Vagina (tissue), 2 donors: ENCODE measurements at regions of chr13 and their contacts with region 1.

Region 1: DNA sequence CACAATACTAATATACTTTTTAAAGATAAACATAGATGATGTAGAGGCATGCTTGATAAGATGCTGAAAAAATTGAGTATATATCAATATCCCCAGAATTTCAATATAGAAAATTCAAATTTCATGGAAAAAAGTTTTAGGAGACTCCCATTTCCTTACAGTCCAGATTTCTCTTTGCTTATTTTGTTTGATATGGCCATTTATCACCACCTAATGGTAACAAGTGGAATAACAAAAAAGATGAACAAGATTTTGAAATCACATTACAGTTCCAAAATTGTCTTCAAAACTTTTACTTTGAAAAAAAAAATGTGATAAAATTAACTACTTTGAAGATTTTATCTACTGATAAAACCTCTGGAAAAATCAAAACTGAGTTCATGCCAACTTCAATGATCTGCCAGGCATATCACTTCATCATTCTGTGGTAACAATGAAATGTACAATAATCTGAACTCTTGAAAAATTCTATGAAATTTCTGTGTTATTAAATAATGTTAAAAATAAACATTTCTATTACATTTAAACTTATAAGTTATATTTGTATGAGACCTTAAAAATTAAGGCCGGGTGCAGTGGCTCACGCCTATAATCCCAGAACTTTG is 17.5 kb downstream of the MIPEP start:
- DNase-seq: no peak
- H3K4me3 ChIP-seq: no peak overlapping the region
- H3K27ac ChIP-seq: no peak overlapping the region
- H3K4me1 ChIP-seq: peaks cover 7% of the 10 kb centered on the region
- H3K27me3 ChIP-seq: no peaks in the 10 kb centered on the region
- CTCF ChIP-seq: peak; percentile 33 to 68 (median 53)
- POLR2A ChIP-seq: no peak

Region 2: GRCh38 chr13:23466144-23467002 is 405.3 kb before region 1 on chr13:
- intact Hi-C with region 1: loop called (anchors 2 kb)
- DNase-seq: no peak
- H3K4me3 ChIP-seq: peak overlapping the region; percentile 54 to 66
- H3K27ac ChIP-seq: peak overlapping the region; percentile 85
- H3K4me1 ChIP-seq: peaks cover 6% of the 10 kb centered on the region
- H3K27me3 ChIP-seq: no peaks in the 10 kb centered on the region
- CTCF ChIP-seq: peak in 2 of 3 experiments; percentile 17 to 61
- POLR2A ChIP-seq: no peak

Region 3: DNA sequence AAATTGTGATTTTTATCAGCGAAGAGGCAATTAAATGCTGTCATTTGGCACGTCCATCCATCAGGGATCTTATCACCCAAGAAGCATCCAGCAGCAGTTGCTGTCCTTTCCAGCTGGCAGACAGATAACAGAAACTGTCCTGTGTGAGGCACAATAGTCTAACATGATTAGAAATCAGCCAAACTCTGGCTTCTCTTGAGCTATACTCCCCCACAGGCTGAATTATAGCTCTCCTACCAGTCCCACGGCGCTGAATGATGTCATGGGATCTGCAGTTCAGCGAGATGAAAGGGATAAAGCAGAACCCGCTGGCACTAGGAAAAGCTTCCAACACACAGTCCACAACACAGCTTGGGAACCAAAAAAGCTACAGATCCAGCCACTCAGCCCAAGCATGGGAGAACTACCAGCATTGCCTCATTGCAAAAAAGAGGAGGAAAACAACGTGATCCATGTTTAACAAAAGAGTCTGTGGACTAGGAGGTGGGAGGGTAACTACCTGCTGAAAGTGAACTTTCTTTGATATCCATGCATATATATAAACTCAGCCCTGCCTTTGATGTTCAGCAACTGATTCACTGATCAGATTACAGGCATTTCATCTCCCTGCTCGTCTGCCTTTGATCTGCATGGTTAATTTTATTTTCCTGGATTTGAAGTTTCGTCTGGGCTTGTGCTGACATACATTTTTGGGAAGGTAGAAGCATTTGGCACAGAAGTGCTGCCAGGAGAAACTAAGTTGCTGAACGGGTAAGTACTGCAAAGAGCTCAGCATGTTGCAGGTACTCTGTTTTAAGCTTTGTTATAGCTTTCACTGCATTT is 301.4 kb before region 1 on chr13 and contains the start of gene TNFRSF19:
- intact Hi-C with region 1: loop called (anchors 5 kb)
- DNase-seq: no peak
- H3K4me3 ChIP-seq: peak within 1 kb of the TSS in 1 of 2 donors; percentile 15
- H3K27ac ChIP-seq: peak within 1 kb of the TSS; percentile 17
- H3K4me1 ChIP-seq: peaks cover 8% of the 10 kb centered on the region
- H3K27me3 ChIP-seq: no peaks in the 10 kb centered on the region
- CTCF ChIP-seq: no peak
- POLR2A ChIP-seq: no peak
- total RNA-seq, gene TNFRSF19: 10.3 TPM